Activated CD4-positive, alpha-beta memory T cell treated with anti-CD3 and anti-CD28 coated beads, Interleukin-2, amount 10 ng/mL, durations not matched to agents 7 days and 5 days (primary cell): ENCODE measurements at regions of chr4 and their contacts with region 1.

Region 1: DNA sequence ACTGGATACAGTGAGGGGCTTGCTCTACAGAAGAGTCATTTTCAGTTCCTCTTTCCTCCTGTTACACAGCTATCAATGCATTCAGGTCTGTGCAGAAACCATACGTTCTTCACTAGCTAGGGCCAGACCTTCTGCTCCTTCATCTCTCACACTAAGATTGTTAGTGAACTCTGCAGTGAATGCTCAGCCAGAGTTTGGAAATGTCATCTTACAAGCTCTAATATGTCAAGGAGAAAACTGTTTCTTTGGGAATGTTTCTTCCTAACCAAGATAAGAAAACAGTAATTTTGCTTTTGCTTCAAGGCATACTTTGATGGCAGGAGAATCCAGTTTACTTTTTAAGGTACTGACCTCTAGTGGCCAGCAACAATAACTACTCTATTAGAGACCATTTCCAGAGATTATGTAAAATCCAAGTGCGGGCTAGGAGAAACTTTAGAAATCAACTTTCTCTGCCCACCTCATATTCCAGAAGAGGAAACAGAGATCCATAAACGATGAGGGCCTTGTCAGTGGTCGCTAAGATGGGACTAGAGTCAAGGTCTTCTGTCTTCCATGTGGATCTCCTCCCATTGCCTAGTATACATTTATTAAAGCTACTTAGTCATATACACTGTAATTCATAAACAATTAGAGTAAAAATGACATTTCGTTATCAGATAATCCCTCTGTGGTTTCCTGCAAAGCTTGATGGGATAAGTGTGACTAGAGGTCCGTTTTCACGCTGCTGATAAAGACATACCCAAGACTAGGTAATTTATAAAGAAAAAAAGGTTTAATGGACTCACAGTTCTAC is 12.1 kb upstream of the CC2D2A start:
- DNase-seq: no peak
- H3K4me3 Mint-ChIP-seq: no peak overlapping the region
- H3K27ac Mint-ChIP-seq: no peak overlapping the region
- H3K4me1 Mint-ChIP-seq: no peaks in the 10 kb centered on the region
- H3K27me3 Mint-ChIP-seq: peaks cover 12% of the 10 kb centered on the region

Region 2: GRCh38 chr4:15231265-15232091 is 226.1 kb before region 1 on chr4:
- CTCF ChIA-PET with region 1: interaction called, 24 read pairs
- POLR2A ChIA-PET with region 1: no interaction called
- DNase-seq: peak; percentile 73
- H3K4me3 Mint-ChIP-seq: no peak overlapping the region
- H3K27ac Mint-ChIP-seq: no peak overlapping the region
- H3K4me1 Mint-ChIP-seq: peaks cover 24% of the 10 kb centered on the region
- H3K27me3 Mint-ChIP-seq: no peaks in the 10 kb centered on the region

Region 3: DNA sequence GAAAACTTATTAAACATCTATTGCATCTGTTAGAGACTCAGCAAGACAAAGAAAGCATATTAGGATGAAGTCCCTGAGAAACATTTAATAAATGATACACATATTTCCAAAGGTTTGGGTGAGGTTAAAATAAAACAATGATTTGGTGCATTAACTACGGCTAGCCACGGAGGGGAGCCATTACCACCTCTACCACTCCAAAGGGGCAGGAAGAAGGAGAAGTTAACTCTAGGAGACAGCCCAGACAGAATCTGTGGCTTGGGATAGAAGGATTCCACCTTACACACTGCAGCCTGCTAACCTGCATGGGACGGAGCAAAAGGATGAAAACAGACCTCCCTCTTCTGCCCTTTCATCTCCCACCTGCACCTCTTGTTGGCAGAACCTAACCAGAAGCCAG is 218.9 kb before region 1 on chr4:
- CTCF ChIA-PET with region 1: interaction called, 24 read pairs
- POLR2A ChIA-PET with region 1: no interaction called
- DNase-seq: peak; percentile 31
- H3K4me3 Mint-ChIP-seq: no peak overlapping the region
- H3K27ac Mint-ChIP-seq: no peak overlapping the region
- H3K4me1 Mint-ChIP-seq: peaks cover 9% of the 10 kb centered on the region
- H3K27me3 Mint-ChIP-seq: peaks cover 3% of the 10 kb centered on the region

Region 4: GRCh38 chr4:15396157-15396800 is 61.3 kb before region 1 on chr4:
- CTCF ChIA-PET with region 1: interaction called, 18 read pairs
- POLR2A ChIA-PET with region 1: no interaction called
- DNase-seq: peak; percentile 56
- H3K4me3 Mint-ChIP-seq: no peak overlapping the region
- H3K27ac Mint-ChIP-seq: no peak overlapping the region
- H3K4me1 Mint-ChIP-seq: peaks cover 11% of the 10 kb centered on the region
- H3K27me3 Mint-ChIP-seq: no peaks in the 10 kb centered on the region

Region 5: GRCh38 chr4:15469402-15470127 is 12.0 kb after region 1 on chr4 and contains the start of gene CC2D2A:
- CTCF ChIA-PET with region 1: interaction called, 19 read pairs
- POLR2A ChIA-PET with region 1: no interaction called
- DNase-seq: no peak
- H3K4me3 Mint-ChIP-seq: no peak within 1 kb of the TSS
- H3K27ac Mint-ChIP-seq: no peak within 1 kb of the TSS
- H3K4me1 Mint-ChIP-seq: peaks cover 8% of the 10 kb centered on the region
- H3K27me3 Mint-ChIP-seq: peaks cover 10% of the 10 kb centered on the region
- total RNA-seq, gene CC2D2A: not detected